ENCODE measurements at regions of chr13 and their contacts with region 1.

Region 1: GRCh38 chr13:75760131-75761021 is 124.2 kb downstream of the LMO7 start:
- DNase-seq: peak; percentile 86 to 92
- H3K4me3 ChIP-seq: peak overlapping the region; percentile 61
- H3K4me3 Mint-ChIP-seq: peak overlapping the region; percentile 76
- H3K27ac Mint-ChIP-seq: peak overlapping the region; percentile 90
- H3K4me1 ChIP-seq: peaks cover 53% of the 10 kb centered on the region
- H3K4me1 Mint-ChIP-seq: peaks cover 61% of the 10 kb centered on the region
- H3K27me3 ChIP-seq: no peaks in the 10 kb centered on the region
- H3K27me3 Mint-ChIP-seq: no peaks in the 10 kb centered on the region
- CTCF ChIP-seq: peak in 1 of 2 experiments; percentile 15

Region 2: GRCh38 chr13:75694722-75695121 is 65.7 kb before region 1 on chr13:
- CTCF ChIA-PET with region 1: interaction called, 26 read pairs
- POLR2A ChIA-PET with region 1: no interaction called
- intact Hi-C with region 1: loop called (anchors 2 kb)
- DNase-seq: no peak
- H3K4me3 ChIP-seq: no peak overlapping the region
- H3K4me3 Mint-ChIP-seq: peak overlapping the region; percentile 2
- H3K27ac Mint-ChIP-seq: no peak overlapping the region
- H3K4me1 ChIP-seq: peaks cover 21% of the 10 kb centered on the region
- H3K4me1 Mint-ChIP-seq: peaks cover 21% of the 10 kb centered on the region
- H3K27me3 ChIP-seq: no peaks in the 10 kb centered on the region
- H3K27me3 Mint-ChIP-seq: no peaks in the 10 kb centered on the region
- CTCF ChIP-seq: no peak

Region 3: DNA sequence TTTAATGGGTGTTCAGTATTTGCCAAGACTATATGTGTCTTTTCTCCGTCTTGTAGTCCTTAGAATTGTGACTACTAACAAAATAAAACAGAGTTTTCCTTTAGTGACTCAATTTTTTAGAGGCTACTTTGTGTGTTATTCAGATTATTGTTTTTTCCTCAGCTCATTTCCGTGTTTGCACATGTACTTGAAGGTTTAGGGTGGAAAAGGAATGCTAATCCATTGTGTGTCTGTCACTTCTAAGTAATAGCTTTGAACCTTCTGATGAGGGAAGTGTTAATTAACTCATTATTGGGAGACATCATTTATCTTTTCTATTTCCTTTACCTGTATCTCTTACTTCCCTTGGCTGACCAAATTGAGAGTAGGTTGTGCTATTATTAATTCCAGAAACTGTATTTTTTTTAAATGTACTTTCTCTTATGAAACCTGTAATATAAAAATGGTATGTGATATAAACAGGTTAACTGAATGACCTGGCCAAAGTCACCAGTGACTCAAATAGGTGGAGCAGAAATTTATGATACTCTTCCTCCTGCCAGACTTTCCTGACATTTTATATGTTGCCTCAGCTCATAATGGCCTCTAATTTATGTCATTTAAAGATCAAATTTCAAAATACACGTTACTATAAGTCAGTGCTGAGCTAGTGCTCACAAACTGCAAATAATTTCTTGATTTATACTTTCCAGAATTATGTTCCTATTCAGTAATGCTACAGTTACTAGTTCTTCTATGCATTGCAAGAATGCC is 35.4 kb before region 1 on chr13:
- CTCF ChIA-PET with region 1: no interaction called
- POLR2A ChIA-PET with region 1: no interaction called
- intact Hi-C with region 1: loop called (anchors 1 kb)
- DNase-seq: no peak
- H3K4me3 ChIP-seq: no peak overlapping the region
- H3K4me3 Mint-ChIP-seq: no peak overlapping the region
- H3K27ac Mint-ChIP-seq: peak overlapping the region; percentile 6
- H3K4me1 ChIP-seq: peaks cover 40% of the 10 kb centered on the region
- H3K4me1 Mint-ChIP-seq: peaks cover 26% of the 10 kb centered on the region
- H3K27me3 ChIP-seq: no peaks in the 10 kb centered on the region
- H3K27me3 Mint-ChIP-seq: no peaks in the 10 kb centered on the region
- CTCF ChIP-seq: no peak

Region 4: DNA sequence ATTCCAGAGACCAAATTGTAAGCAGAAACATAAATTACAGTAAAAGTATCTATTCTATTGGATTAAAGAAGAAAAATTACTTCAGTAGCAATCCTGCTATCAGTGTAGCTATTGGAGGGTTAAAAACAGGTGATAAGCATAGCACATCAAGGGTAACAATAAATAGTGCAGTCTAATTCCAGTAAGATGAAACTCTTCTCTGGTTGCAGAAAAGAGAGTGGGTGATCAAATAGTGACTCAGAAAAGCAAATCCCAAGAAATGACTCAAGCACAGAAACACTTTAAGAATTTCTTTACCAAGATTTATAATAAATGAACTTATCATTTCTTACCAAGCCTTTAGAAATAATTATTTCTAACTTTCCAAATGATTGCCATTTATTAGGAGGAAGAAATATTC is 11.4 kb after region 1 on chr13:
- CTCF ChIA-PET with region 1: no interaction called
- POLR2A ChIA-PET with region 1: interaction called, 4 read pairs
- intact Hi-C with region 1: loop called (anchors 1 kb)
- DNase-seq: no peak
- H3K4me3 ChIP-seq: no peak overlapping the region
- H3K4me3 Mint-ChIP-seq: peak overlapping the region; percentile 25
- H3K27ac Mint-ChIP-seq: peak overlapping the region; percentile 13
- H3K4me1 ChIP-seq: peaks cover 76% of the 10 kb centered on the region
- H3K4me1 Mint-ChIP-seq: peaks cover 44% of the 10 kb centered on the region
- H3K27me3 ChIP-seq: no peaks in the 10 kb centered on the region
- H3K27me3 Mint-ChIP-seq: no peaks in the 10 kb centered on the region
- CTCF ChIP-seq: no peak

Region 5: DNA sequence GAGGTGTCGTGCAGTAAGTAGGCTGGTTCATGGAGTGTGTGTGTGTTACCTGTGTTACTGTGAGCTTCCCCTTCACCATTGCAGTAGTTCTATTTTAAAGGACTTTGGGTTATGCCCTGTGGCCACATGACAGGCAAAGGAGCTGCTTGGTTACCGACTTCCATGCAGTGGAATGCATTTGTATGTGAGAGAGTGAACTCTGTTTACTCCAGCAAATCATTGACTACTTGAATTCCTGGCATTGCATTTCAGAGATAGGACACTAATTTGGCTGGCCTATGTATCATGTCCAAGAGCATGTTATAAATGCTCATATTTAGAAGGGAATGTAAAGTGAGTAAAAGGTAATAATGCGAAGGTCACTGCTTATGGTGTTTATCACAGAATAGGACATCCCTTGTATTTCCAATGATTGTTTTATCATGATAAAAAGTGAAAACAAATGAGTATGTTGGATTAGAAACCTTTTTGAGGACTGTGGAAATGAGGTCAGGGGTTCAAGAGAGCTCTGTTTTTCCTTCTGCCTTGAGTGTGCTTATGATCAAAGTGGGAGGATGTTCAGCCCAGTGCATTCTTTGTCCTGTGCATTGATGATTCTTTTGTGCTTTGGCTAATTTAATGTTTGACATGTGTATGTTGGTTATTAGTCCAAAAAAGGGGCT is 32.3 kb after region 1 on chr13:
- CTCF ChIA-PET with region 1: interaction called, 25 read pairs
- POLR2A ChIA-PET with region 1: interaction called, 22 read pairs
- intact Hi-C with region 1: loop called (anchors 1 kb)
- DNase-seq: peak; percentile 85 to 89
- H3K4me3 ChIP-seq: no peak overlapping the region
- H3K4me3 Mint-ChIP-seq: peak overlapping the region; percentile 45
- H3K27ac Mint-ChIP-seq: peak overlapping the region; percentile 97
- H3K4me1 ChIP-seq: peaks cover 71% of the 10 kb centered on the region
- H3K4me1 Mint-ChIP-seq: peaks cover 43% of the 10 kb centered on the region
- H3K27me3 ChIP-seq: no peaks in the 10 kb centered on the region
- H3K27me3 Mint-ChIP-seq: no peaks in the 10 kb centered on the region
- CTCF ChIP-seq: no peak

Region 6: DNA sequence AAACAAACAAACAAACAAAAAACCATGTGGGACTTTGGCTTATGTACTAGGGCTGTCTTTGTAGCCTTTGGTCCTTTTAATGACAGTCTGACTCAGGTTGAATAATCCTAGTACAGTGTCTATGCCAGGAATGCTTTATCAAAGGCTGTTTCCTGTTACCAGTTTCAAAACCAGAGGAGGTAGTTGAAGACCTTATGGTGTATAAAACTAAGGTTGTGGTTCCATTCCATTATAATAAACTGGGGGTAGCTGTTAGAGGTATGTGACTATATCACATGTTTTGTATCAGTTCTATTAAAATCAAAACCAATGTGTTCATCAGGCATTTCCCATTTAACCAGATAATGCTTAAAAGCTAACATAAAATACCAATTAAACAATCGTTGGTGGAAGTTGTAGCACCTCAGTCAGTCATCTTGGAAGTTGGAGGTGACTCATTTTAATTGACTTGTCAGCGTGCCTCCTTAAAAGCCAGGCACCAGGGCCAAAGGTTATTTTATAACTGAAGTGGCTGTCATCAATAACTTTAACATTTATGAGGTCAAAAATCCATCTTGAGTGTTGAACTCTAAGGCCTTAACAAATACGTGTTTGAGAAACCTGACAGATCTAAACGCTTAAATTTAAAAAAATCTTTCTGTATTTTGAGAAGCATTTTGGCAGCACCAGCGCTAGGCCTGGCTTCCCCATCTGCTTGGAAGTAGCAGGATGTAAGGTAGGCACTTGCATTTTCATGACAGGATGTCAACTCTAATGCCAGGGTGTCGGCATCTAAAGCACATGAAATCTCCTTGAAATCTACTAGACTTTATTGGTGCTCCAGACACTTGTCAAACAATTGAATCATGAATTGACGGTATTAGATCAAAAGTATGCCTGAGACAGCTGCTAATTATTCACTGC is 38.2 kb after region 1 on chr13:
- CTCF ChIA-PET with region 1: interaction called, 25 read pairs
- POLR2A ChIA-PET with region 1: no interaction called
- intact Hi-C with region 1: loop called (anchors 1 kb)
- DNase-seq: no peak
- H3K4me3 ChIP-seq: no peak overlapping the region
- H3K4me3 Mint-ChIP-seq: no peak overlapping the region
- H3K27ac Mint-ChIP-seq: no peak overlapping the region
- H3K4me1 ChIP-seq: peaks cover 30% of the 10 kb centered on the region
- H3K4me1 Mint-ChIP-seq: peaks cover 37% of the 10 kb centered on the region
- H3K27me3 ChIP-seq: no peaks in the 10 kb centered on the region
- H3K27me3 Mint-ChIP-seq: no peaks in the 10 kb centered on the region
- CTCF ChIP-seq: no peak

Region 7: DNA sequence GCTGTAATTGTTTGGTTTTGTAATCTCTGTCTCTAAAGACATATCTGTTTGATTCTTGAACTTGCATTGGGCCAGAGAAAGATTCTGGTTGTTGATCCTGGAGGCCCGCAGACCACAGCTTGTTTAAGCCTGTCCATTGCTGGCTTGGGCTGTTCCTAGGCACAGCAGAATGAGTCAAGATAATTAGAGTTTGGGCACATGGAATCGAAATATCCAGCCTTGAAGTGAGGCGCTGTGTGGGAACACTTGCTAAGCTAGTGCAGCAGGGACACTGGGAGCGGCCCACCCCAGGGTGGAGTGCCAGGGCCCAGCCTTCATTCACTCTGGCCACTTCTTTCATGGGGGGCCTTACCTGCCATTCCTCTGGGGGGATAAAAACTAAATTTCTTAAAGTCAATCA is 95.5 kb after region 1 on chr13:
- CTCF ChIA-PET with region 1: no interaction called
- POLR2A ChIA-PET with region 1: no interaction called
- intact Hi-C with region 1: loop called (anchors 5 kb)
- DNase-seq: no peak
- H3K4me3 ChIP-seq: no peak overlapping the region
- H3K4me3 Mint-ChIP-seq: no peak overlapping the region
- H3K27ac Mint-ChIP-seq: no peak overlapping the region
- H3K4me1 ChIP-seq: no peaks in the 10 kb centered on the region
- H3K4me1 Mint-ChIP-seq: peaks cover 7% of the 10 kb centered on the region
- H3K27me3 ChIP-seq: no peaks in the 10 kb centered on the region
- H3K27me3 Mint-ChIP-seq: no peaks in the 10 kb centered on the region
- CTCF ChIP-seq: no peak

Measured in Caco-2 (cell line).